ENCODE measurements at regions of chr6 and their contacts with region 1.

Region 1: GRCh38 chr6:30717042-30717844 is at the start of gene MDC1:
- DNase-seq: peak; percentile 100
- H3K4me3 ChIP-seq: peak within 1 kb of the TSS; percentile 71
- CTCF ChIP-seq: peak; percentile 31

Region 2: DNA sequence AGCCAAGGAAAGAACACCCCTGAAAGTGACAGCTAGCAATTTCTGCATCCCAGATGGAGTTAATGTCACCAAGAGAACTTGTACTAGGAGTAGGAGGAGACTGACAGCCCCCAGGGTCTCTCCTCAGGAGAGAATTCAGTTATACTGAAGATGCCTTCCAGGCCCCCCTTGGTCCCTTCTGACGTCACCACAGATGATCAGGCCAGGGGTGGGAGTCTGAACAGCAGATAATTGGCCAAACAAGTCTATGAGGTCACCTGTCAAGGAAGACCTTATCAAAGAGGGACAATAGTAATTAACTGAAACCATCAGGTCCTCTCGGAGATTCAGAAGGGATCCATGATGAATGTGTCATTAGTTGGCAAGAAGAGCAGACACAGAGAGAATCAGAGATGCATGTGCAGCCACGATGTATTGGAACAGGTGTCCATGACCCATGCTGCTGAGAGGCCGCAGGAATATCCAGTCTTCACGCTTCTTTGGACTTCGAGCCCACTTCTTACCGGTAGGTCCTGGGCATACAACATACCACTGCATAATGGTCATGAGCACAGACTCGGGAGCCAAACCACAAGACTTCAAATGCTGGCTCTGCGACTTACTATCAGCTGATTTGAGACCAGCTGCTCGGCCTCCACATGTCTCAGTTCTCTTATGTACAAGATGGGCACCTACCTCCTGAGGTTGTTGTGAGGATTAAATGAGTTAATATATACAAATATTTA is 566.4 kb before region 1 on chr6:
- CTCF ChIA-PET with region 1: no interaction called
- POLR2A ChIA-PET with region 1: no interaction called
- DNase-seq: no peak
- H3K4me3 ChIP-seq: no peak overlapping the region
- CTCF ChIP-seq: no peak

Region 3: GRCh38 chr6:30678964-30679726 is 38.1 kb before region 1 on chr6:
- CTCF ChIA-PET with region 1: interaction called, 504 read pairs
- POLR2A ChIA-PET with region 1: interaction called, 24 read pairs
- DNase-seq: no peak
- H3K4me3 ChIP-seq: peak overlapping the region; percentile 35
- CTCF ChIP-seq: peak; percentile 94

Region 4: DNA sequence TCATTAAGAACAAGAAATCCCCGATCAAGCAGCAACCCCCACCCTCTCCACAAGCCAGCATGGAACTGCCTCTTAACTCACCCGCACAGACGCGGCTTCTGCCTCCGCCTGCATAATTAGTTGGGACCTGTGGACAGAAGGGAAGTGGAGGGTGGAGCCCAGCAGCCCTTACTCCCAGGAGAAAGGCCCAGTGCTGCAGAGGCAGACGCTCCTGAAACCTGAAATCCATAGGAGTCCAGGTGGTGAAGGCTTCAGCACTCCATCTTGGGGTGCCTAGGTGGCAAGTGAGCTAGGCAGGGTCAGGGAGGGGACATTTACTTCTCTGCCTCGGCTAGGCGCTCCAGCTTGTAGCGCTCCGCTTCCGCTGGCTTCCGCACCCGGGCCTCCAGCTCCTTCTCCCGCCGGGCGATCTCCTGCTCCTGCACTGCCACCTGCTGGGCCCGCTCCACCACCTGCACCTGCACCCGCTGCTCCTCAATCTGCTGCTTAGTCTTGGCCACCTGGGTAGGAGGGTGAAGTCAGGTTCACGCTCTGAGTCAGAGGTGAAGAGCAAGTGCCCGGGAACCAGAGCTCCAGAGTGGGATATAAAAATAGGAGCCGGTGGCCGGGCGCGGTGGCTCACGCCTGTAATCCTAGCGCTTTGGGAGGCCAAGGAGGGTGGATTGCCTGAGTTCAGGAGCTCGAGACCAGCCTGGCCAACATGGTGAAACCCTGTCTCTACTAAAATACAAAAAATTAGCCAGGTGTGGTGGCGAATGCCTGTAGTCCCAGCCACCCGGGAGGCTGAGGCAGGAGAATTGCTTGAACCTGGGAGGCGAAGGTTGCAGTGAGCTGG is 13.6 kb after region 1 on chr6:
- CTCF ChIA-PET with region 1: interaction called, 67 read pairs
- POLR2A ChIA-PET with region 1: interaction called, 11 read pairs
- DNase-seq: no peak
- H3K4me3 ChIP-seq: no peak overlapping the region
- CTCF ChIP-seq: peak; percentile 64

Region 5: GRCh38 chr6:30752157-30752927 is 35.1 kb after region 1 on chr6:
- CTCF ChIA-PET with region 1: interaction called, 9 read pairs
- POLR2A ChIA-PET with region 1: interaction called, 10 read pairs
- DNase-seq: peak; percentile 100
- H3K4me3 ChIP-seq: 0 out of 2 replicates have a peak overlapping the region, but pooled peaks have one; percentile 4
- CTCF ChIP-seq: no peak

Region 6: DNA sequence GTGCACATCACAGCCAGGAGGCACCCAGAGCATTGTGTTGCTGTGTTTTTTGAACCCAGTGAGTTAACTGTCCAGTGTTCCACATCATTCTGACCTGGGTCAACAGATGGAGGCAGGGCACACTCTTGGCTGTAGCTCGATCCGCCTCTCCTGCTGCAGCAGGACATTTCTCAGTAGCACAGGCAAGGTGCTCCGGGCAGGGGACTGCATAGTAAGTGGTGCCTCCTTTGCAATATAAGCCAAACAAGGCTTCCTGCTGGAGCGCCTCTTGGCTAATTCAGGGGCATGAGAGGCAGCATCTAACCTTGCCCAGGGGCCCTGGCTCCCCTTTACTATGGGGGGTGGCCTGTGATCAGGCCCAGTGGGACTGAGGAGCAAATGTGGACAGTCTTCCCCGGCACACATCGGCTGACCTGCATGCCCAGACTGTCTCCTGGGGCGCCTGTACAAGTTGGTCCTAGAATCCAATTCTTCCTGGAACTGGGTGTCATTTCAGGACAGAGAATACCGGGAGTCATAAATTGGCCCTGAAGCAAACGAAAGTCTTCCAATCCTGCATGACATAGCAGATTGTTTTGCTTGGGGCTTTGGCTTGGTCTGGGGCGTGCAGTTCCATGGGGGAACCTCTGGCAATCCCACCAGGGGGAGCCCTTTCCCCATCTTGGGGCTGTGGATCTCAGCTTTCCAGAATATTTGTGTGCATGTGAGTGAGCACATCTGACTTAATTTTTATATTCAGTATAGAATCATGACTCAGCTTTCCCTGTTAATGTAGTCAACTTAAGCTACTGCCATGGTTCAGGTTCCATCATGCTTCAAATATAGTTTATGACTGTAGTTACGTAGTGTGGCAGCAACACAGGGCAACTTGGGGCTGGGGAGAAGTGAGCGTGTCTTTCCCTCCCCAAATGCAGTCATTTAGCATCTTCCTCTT is 111.1 kb after region 1 on chr6:
- CTCF ChIA-PET with region 1: interaction called, 13 read pairs
- POLR2A ChIA-PET with region 1: no interaction called
- DNase-seq: peak; percentile 70
- H3K4me3 ChIP-seq: no peak overlapping the region
- CTCF ChIP-seq: peak; percentile 90

Region 7: GRCh38 chr6:30870546-30870945 is 153.3 kb after region 1 on chr6:
- CTCF ChIA-PET with region 1: no interaction called
- POLR2A ChIA-PET with region 1: no interaction called
- DNase-seq: no peak
- H3K4me3 ChIP-seq: no peak overlapping the region
- CTCF ChIP-seq: no peak

Measured in AG04449 (cell line).